Dorsolateral prefrontal cortex (tissue), 120 donors: ENCODE measurements at regions of chr1 and their contacts with region 1.

Region 1: GRCh38 chr1:43529206-43529731 is 1.4 kb upstream of the PTPRF start:
- DNase-seq: peak; percentile 42 to 90 (median 84)
- H3K4me3 ChIP-seq: peak overlapping the region in 2 of 59 donors; percentile 3 to 16
- H3K27ac ChIP-seq: peak overlapping the region in 20 of 59 donors; percentile 7 to 97 (median 82)
- H3K27me3 ChIP-seq: no peaks in the 10 kb centered on the region
- CTCF ChIP-seq: peak; percentile 88 to 99 (median 97)

Region 2: DNA sequence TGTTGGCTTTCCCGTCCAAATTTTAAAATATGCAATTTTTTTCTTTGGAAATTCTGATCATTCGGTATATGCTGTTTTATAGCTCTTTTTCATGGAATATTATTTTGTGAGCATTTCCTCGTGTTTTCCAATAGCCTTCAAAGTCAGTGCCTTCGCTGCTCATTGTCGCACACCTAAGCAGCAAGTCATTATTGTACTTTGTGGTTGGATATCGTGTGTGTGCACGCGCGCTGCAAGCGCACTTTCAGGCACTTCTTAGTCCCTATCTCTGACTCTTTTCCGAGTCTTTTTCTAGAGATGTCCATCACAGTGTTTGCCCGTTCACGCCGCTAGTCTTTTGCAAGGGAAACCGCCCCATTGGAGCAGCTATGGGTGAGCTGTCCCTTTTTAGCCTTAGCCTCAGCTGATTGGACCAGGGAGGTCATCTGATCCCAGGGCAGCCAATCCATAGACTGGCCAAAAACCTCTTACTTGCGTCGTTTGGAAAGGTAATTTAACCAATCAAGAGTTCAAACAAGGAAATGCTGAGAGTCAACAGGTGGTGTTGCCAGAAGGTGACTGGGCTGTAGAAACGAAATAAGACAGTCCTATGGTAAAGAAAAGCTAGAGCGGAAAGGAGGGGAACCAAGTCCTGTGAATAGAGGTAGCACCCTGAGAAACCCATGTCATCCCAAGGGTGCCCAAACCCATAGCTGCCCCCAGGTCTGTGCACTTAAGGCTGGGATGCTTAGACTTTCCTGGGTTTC is 74.8 kb before region 1 on chr1:
- intact Hi-C with region 1: loop called in 1 of 2 experiments (anchors 10 kb)
- DNase-seq: peak; percentile 49 to 87 (median 79)
- H3K4me3 ChIP-seq: peak overlapping the region; percentile 43 to 78 (median 65)
- H3K27ac ChIP-seq: peak overlapping the region in 58 of 59 donors; percentile 76 to 96 (median 92)
- H3K27me3 ChIP-seq: no peaks in the 10 kb centered on the region
- CTCF ChIP-seq: peak in 8 of 56 donors; percentile 4 to 30 (median 12)

Region 3: GRCh38 chr1:43597721-43598120 is 68.5 kb after region 1 on chr1:
- intact Hi-C with region 1: loop called in 1 of 2 experiments (anchors 1 kb)
- DNase-seq: no peak
- H3K4me3 ChIP-seq: no peak overlapping the region
- H3K27ac ChIP-seq: no peak overlapping the region
- H3K27me3 ChIP-seq: no peaks in the 10 kb centered on the region
- CTCF ChIP-seq: no peak

Region 4: DNA sequence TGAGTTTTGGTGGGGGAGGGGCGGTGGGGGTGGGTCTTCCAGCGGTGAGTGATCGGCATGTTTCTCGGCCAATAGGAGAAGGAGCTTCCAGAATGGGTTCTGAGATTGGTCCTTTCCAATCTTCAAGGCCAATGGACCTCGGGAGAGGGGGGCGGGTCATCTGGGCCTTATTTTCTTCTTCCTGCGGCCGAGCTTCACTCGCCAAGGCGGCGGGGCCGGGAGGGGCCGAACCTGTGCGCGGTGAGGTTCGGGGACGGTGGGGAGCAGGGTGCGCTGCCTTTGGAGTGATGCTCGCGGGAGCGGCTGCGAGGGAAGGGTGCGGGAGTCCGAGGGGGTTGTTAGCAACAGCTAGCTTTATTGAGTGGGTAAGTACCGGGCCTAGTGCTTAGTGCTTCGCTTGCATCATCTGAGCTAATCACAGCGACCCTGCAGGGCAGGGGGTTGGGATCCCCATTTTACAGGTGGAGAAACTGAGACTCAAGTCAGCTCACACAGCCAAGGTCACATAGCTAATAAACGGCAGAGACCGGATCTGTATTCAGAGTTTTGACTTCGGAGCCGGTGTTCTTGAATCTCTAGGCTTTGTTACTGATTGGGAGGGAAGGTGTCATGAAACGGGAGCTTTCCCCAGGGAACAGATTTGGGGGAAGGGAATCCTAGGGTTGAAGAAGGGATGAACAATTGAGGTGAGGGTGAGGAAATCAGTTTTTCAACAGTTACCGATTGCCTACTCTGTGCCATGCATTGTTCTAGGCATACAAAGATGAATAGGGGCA is 121.2 kb after region 1 on chr1:
- intact Hi-C with region 1: loop called (anchors 2 kb)
- DNase-seq: peak; percentile 77 to 98 (median 95)
- H3K4me3 ChIP-seq: peak overlapping the region; percentile 50 to 99 (median 90)
- H3K27ac ChIP-seq: peak overlapping the region; percentile 83 to 100 (median 98)
- H3K27me3 ChIP-seq: no peaks in the 10 kb centered on the region
- CTCF ChIP-seq: peak in 3 of 56 donors; percentile 14 to 18 (median 16)

Region 5: DNA sequence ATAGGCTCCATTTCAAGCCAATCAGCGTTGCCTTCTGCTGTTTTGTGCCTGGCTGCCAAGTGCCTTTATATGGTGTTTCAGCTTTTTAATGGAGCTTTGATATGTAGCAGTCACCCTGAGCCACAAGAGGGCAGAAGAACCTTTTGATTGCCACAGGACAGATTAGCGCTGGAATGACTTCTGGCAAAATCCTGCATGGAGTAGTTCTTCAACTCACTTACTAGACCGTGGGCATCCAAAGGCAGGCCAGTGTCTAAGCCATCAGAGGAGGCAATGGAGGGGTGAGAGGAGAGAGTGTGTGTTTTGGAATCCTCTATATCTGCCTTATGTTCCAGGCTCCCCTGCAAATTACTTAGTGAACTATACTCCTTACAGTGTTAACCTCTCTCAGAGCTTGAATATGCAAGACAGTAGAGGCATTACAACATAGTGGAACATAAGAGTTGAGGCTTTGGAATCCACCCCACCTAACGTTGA is 234.3 kb after region 1 on chr1:
- intact Hi-C with region 1: loop called in 1 of 2 experiments (anchors 5 kb)
- DNase-seq: peak in 9 of 10 donors; percentile 47 to 88 (median 61)
- H3K4me3 ChIP-seq: no peak overlapping the region
- H3K27ac ChIP-seq: no peak overlapping the region
- H3K27me3 ChIP-seq: no peaks in the 10 kb centered on the region
- CTCF ChIP-seq: peak; percentile 59 to 91 (median 83)

Region 6: DNA sequence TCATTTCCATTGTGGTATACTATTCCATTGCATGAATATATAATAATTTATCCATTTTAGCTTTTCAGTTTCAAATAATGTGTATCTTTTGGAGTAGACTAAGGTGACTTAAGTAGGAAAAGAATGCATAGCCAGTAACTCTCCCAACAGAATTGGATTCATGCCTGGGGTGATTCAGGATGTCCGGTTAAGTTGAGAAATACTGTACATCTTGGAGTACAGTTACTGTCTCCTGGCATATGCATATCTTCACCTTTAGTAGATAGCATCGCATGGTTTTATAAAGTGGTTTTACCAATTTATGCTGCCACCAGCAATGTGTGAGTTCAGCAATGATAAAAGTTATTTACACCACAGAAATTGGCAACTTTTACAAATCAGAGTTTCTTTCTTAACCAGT is 520.6 kb after region 1 on chr1:
- intact Hi-C with region 1: loop called in 1 of 2 experiments (anchors 10 kb)
- DNase-seq: no peak
- H3K4me3 ChIP-seq: no peak overlapping the region
- H3K27ac ChIP-seq: no peak overlapping the region
- H3K27me3 ChIP-seq: no peaks in the 10 kb centered on the region
- CTCF ChIP-seq: no peak